ENCODE measurements at regions of chr4 and their contacts with region 1.

Region 1: GRCh38 chr4:142567199-142567598 is 278.9 kb downstream of the INPP4B start:
- DNase-seq: peak; percentile 73
- ATAC-seq: peak; percentile 79
- H3K4me3 Mint-ChIP-seq: peak overlapping the region; percentile 88
- H3K27ac Mint-ChIP-seq: peak overlapping the region; percentile 95
- H3K4me1 Mint-ChIP-seq: peaks cover 64% of the 10 kb centered on the region
- H3K27me3 Mint-ChIP-seq: no peaks in the 10 kb centered on the region

Region 2: GRCh38 chr4:141643557-141643956 is 923.6 kb before region 1 on chr4:
- CTCF ChIA-PET with region 1: no interaction called
- POLR2A ChIA-PET with region 1: no interaction called
- intact Hi-C with region 1: no loop called
- DNase-seq: no peak
- ATAC-seq: peak; percentile 89
- H3K4me3 Mint-ChIP-seq: no peak overlapping the region
- H3K27ac Mint-ChIP-seq: no peak overlapping the region
- H3K4me1 Mint-ChIP-seq: peaks cover 12% of the 10 kb centered on the region
- H3K27me3 Mint-ChIP-seq: peaks cover 15% of the 10 kb centered on the region

Region 3: GRCh38 chr4:142126890-142127497 is 440.2 kb before region 1 on chr4:
- CTCF ChIA-PET with region 1: interaction called, 3 read pairs
- POLR2A ChIA-PET with region 1: no interaction called
- intact Hi-C with region 1: loop called (anchors 1 to 2 kb)
- DNase-seq: peak; percentile 75
- ATAC-seq: peak; percentile 74
- H3K4me3 Mint-ChIP-seq: no peak overlapping the region
- H3K27ac Mint-ChIP-seq: no peak overlapping the region
- H3K4me1 Mint-ChIP-seq: peaks cover 32% of the 10 kb centered on the region
- H3K27me3 Mint-ChIP-seq: no peaks in the 10 kb centered on the region

Region 4: DNA sequence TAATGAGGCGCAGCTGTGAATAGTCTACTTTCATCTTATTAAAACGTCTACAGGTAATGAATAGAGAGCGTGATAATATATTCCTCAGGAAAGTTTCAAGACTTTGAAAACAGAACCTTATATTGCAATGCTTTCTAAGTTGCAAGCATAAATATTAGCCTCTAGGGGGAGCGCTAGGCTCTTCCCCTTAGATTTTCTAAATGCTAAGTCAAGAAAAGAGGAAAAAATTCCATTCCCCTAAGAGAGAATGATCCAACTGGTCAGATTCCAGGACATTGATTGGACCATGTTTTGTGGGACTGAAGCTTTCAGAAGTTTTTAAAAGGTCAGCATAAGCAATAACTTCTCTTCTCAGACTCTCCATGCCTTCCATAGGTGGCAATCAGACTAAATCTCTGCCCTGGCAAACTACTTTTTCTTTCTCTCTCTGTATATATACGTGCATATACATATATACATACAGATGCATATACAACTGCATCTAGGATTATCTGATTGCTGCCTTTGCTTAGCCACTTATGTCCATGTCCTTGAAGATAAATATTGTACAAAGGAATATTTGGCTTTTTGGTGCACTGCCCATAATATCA is 214.0 kb before region 1 on chr4:
- CTCF ChIA-PET with region 1: interaction called, 6 read pairs
- POLR2A ChIA-PET with region 1: interaction called, 5 read pairs
- intact Hi-C with region 1: loop called (anchors 2 kb)
- DNase-seq: no peak
- ATAC-seq: peak; percentile 20
- H3K4me3 Mint-ChIP-seq: peak overlapping the region; percentile 37
- H3K27ac Mint-ChIP-seq: peak overlapping the region; percentile 97
- H3K4me1 Mint-ChIP-seq: peaks cover 97% of the 10 kb centered on the region
- H3K27me3 Mint-ChIP-seq: no peaks in the 10 kb centered on the region

Region 5: GRCh38 chr4:142405021-142405694 is 162.0 kb before region 1 on chr4:
- CTCF ChIA-PET with region 1: interaction called, 10 read pairs
- POLR2A ChIA-PET with region 1: interaction called, 14 read pairs
- intact Hi-C with region 1: loop called (anchors 1 kb)
- DNase-seq: peak; percentile 78
- ATAC-seq: peak; percentile 50
- H3K4me3 Mint-ChIP-seq: peak overlapping the region; percentile 87
- H3K27ac Mint-ChIP-seq: peak overlapping the region; percentile 99
- H3K4me1 Mint-ChIP-seq: peaks cover 51% of the 10 kb centered on the region
- H3K27me3 Mint-ChIP-seq: no peaks in the 10 kb centered on the region

Region 6: DNA sequence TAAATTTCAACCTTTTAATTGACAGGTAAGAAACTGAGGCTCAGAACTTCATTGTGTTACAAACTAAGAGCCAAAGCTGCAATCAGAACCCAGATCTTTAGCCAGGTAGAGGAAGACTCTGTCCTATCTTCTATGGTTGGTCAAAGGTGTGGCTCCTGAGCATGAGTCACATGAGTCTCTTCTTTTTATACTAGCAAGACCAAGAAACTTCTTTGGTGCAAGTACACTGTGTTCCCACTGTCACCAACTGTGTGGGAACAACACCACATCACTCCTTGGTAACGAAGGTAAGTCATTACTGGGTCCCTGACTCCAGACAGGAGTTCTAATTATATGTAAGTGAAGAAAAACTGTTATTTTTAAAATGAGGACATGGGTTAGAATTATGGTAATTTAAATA is 11.2 kb before region 1 on chr4:
- CTCF ChIA-PET with region 1: interaction called, 6 read pairs
- POLR2A ChIA-PET with region 1: interaction called, 8 read pairs
- intact Hi-C with region 1: loop called (anchors 1 kb)
- DNase-seq: no peak
- ATAC-seq: peak; percentile 41
- H3K4me3 Mint-ChIP-seq: peak overlapping the region; percentile 57
- H3K27ac Mint-ChIP-seq: peak overlapping the region; percentile 86
- H3K4me1 Mint-ChIP-seq: peaks cover 87% of the 10 kb centered on the region
- H3K27me3 Mint-ChIP-seq: no peaks in the 10 kb centered on the region

Region 7: GRCh38 chr4:142595222-142595871 is 28.1 kb after region 1 on chr4:
- CTCF ChIA-PET with region 1: no interaction called
- POLR2A ChIA-PET with region 1: no interaction called
- intact Hi-C with region 1: no loop called
- DNase-seq: no peak
- ATAC-seq: no peak
- H3K4me3 Mint-ChIP-seq: no peak overlapping the region
- H3K27ac Mint-ChIP-seq: no peak overlapping the region
- H3K4me1 Mint-ChIP-seq: peaks cover 6% of the 10 kb centered on the region
- H3K27me3 Mint-ChIP-seq: no peaks in the 10 kb centered on the region

Region 8: GRCh38 chr4:142719854-142720541 is 152.8 kb after region 1 on chr4:
- CTCF ChIA-PET with region 1: interaction called, 6 read pairs
- POLR2A ChIA-PET with region 1: interaction called, 4 read pairs
- intact Hi-C with region 1: loop called in 1 of 2 experiments (anchors 1 kb)
- DNase-seq: no peak
- ATAC-seq: peak; percentile 70
- H3K4me3 Mint-ChIP-seq: no peak overlapping the region
- H3K27ac Mint-ChIP-seq: peak overlapping the region; percentile 47
- H3K4me1 Mint-ChIP-seq: peaks cover 34% of the 10 kb centered on the region
- H3K27me3 Mint-ChIP-seq: no peaks in the 10 kb centered on the region

Region 9: DNA sequence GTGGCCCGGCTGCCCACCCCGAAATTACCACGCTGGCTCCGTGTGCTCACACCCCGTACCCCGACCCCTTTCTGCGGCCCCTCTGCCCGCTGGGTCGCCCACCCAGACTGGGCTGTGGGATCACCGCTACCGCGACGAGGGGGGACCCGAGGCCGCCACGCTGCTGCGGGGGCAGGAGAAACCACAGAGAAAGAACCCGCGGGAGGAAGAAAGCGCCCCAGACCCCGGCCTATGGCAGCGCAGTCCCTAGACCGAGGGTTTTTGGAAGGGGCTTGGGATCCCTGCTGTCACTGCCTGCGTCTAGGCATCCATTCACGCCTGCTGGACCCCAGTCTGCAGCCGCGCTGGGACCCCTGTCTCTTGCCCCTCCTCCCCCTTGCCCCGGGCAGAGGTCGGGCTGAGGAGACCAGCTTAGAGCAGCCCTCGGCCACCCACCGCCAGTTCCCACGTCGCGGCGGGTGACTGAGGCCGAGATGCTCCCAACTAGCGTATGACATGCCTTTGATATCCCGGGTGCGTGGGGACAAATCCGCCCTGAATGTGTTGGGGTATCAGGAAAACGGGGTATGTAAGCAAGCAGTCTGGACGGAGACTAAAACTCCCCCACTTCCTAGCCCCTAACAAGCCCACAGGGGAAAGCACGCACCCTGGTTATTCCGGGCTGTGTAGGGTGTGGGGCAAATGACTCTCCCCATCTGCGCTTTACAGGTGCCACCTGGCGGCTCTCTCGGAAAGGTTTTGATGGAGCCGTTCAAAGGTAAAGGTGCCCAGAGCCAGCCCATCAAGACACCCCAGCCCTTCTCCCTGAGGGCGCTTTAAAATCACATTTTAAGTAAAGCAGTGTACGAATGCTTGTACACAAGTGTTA is 279.8 kb after region 1 on chr4:
- CTCF ChIA-PET with region 1: no interaction called
- POLR2A ChIA-PET with region 1: no interaction called
- intact Hi-C with region 1: loop called (anchors 2 to 5 kb)
- DNase-seq: peak; percentile 89
- ATAC-seq: peak; percentile 82
- H3K4me3 Mint-ChIP-seq: peak overlapping the region; percentile 91
- H3K27ac Mint-ChIP-seq: peak overlapping the region; percentile 85
- H3K4me1 Mint-ChIP-seq: peaks cover 17% of the 10 kb centered on the region
- H3K27me3 Mint-ChIP-seq: peaks cover 6% of the 10 kb centered on the region

Region 10: GRCh38 chr4:142893012-142893411 is 325.8 kb after region 1 on chr4:
- CTCF ChIA-PET with region 1: no interaction called
- POLR2A ChIA-PET with region 1: no interaction called
- intact Hi-C with region 1: no loop called
- DNase-seq: no peak
- ATAC-seq: no peak
- H3K4me3 Mint-ChIP-seq: no peak overlapping the region
- H3K27ac Mint-ChIP-seq: no peak overlapping the region
- H3K4me1 Mint-ChIP-seq: no peaks in the 10 kb centered on the region
- H3K27me3 Mint-ChIP-seq: peaks cover 5% of the 10 kb centered on the region